GM12878 (cell line): ENCODE measurements at regions of chr5 and their contacts with region 1.

Region 1: GRCh38 chr5:68612972-68613371 is 397.4 kb downstream of the PIK3R1 start:
- DNase-seq: no peak
- ATAC-seq: no peak
- H3K4me3 ChIP-seq: no peak overlapping the region
- H3K27ac ChIP-seq: no peak overlapping the region
- H3K4me1 ChIP-seq: no peaks in the 10 kb centered on the region
- H3K27me3 ChIP-seq: no peaks in the 10 kb centered on the region
- CTCF ChIP-seq: no peak
- EP300 ChIP-seq: no peak
- POLR2A ChIP-seq: no peak
- RAD21 ChIP-seq: no peak

Region 2: DNA sequence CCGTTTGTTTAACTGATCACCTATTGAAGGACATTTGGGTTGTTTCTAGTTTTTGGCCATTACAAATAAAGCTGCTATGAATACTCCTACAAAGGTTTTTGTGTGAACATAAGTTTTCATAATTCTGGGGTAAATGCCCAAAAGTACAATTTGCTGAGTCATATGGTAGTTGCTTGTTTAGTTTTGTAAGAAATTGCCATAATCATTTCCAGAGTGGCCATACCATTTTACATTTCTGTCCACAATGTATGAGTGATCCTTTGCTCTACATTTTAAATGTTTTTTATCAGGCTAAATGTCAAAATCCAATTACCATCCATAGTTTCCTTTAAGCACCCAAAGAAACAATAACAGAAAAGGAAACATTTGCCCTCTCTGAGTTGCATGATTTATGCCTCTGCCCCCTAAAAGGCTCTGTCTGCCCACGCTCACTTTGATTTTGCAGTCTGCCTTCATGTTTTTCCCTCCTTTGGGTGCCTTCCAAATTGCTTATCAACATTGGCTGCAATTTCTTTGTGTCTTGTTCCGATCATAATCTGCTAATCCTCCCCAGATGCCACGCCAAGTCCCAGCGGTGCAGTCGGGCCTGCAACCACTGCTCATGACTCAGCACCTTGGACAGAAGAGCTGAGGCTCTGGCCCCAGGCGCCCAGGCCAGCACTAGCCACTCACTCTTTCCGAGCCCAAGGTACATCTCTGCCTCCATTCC is 58.2 kb before region 1 on chr5:
- CTCF ChIA-PET with region 1: no interaction called
- POLR2A ChIA-PET with region 1: no interaction called
- RAD21 ChIA-PET with region 1: no interaction called
- SMC1A ChIA-PET with region 1: no interaction called
- in situ Hi-C with region 1: no loop called
- intact Hi-C with region 1: loop called (anchors 10 kb)
- DNase-seq: no peak
- ATAC-seq: no peak
- H3K4me3 ChIP-seq: no peak overlapping the region
- H3K27ac ChIP-seq: no peak overlapping the region
- H3K4me1 ChIP-seq: no peaks in the 10 kb centered on the region
- H3K27me3 ChIP-seq: no peaks in the 10 kb centered on the region
- CTCF ChIP-seq: no peak
- EP300 ChIP-seq: no peak
- POLR2A ChIP-seq: no peak
- RAD21 ChIP-seq: no peak

Region 3: DNA sequence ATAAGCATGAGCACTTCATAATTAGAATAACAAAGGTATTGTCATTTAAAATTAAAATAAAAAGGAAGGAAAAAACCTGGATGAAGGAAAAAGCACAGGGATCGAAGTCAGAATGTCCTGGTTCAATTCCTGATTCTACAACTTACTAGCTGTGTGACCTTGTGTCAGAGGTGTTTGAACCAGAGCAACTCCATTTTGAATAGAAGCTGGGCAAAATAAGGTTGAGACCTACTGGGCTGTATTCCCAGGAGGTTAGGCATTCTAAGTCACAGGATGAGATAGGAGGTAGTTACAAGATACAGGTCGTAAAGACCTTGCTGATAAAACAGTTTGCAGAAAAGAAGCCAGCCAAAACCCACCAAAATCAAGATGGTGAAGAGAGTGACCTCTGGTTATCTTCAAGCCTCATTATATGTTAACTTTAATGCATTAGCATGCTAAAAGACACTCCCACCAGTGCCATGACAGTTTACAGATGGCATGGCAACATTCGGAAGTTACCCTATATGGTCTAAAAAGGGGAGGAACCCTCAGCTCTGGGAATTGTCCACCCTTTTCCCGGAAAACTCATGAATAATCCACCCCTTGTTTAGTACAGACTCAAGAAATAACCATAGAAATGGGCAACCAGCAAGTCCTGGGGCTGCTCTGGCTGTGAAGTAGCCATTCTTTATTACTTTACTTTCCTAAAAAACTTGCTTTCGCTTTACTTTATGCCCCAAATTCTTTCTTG is 15.3 kb after region 1 on chr5:
- CTCF ChIA-PET with region 1: no interaction called
- POLR2A ChIA-PET with region 1: no interaction called
- RAD21 ChIA-PET with region 1: no interaction called
- SMC1A ChIA-PET with region 1: no interaction called
- in situ Hi-C with region 1: no loop called
- intact Hi-C with region 1: no loop called
- DNase-seq: no peak
- ATAC-seq: no peak
- H3K4me3 ChIP-seq: no peak overlapping the region
- H3K27ac ChIP-seq: no peak overlapping the region
- H3K4me1 ChIP-seq: no peaks in the 10 kb centered on the region
- H3K27me3 ChIP-seq: no peaks in the 10 kb centered on the region
- CTCF ChIP-seq: no peak
- EP300 ChIP-seq: no peak
- POLR2A ChIP-seq: no peak
- RAD21 ChIP-seq: no peak